ENCODE measurements at regions of chr14 and their contacts with region 1.

Region 1: DNA sequence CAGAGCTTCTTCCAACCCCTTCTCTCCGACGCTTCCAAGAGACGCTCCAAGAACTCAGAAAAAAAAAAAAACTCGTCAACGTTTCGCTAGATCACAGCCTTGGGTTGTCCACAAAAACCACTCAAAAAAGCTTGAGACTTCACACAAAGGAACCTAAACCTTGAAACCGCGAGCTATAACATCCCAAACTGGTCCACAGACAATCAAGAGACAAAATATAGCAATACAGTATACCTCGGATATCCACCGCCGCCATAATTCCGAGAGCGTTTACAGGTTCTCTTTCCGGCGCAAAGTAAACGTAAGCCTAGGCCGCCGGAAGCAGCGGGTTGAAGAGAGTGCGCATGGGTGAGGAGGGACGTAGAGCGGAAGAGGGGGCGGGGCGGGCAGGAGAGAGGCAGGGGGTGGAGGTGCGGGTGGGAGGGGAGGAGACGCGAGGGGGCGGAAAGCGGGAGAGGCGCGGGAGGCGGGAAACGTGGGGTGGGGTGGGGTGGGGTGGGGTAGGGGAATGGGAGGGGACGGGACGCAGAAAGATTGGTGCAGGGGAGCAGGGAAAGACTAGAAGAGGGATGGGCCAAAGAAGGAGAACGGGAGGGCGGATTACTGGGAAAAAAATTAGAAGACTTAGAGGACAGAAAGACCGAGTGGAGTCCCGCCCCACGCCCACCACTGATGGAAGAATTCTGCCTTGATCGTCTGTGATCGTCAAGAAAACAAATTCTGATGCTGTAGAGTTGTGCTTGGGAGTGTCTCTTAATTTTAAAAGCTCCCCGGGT is at the start of gene MED6:
- DNase-seq: peak; percentile 94
- ATAC-seq: peak; percentile 95
- H3K4me3 ChIP-seq: peak within 1 kb of the TSS; percentile 87
- H3K27ac ChIP-seq: peak within 1 kb of the TSS; percentile 31
- H3K4me1 ChIP-seq: peaks cover 24% of the 10 kb centered on the region
- H3K27me3 ChIP-seq: no peaks in the 10 kb centered on the region
- CTCF ChIP-seq: no peak
- total RNA-seq, gene MED6: 37.8 and 46.9 TPM in 2 replicates

Region 2: DNA sequence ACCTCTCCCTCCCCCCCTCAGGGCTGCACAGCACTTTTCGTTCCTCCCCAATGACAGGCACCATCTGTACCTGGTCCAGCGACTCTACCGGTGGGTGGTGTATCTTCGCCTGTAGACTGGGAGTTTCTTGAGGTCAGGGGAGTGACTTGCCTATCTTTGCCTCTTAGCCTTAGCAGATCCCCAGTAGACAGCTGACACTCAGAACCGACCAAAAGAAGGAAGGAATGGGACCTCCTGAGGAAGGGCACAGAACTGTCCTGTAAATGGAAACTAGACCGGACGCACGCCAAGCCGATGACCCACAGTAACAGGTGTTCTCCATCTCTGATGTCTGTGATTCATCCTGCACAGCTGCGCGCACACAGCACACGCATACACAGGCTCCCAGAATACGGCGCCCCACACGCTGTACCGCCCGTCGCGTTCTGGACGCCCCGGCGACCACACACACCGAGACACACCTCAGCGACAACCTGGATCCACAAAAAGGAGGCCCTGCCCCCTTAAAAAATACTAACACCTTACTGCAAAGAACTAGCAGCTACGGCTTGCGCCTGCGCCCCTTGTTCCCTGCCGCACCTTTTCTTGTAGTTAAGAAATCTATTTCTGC is 40.5 kb after region 1 on chr14:
- CTCF ChIA-PET with region 1: no interaction called
- POLR2A ChIA-PET with region 1: no interaction called
- intact Hi-C with region 1: loop called (anchors 2 kb)
- DNase-seq: peak; percentile 69
- ATAC-seq: peak; percentile 78
- H3K4me3 ChIP-seq: peak overlapping the region; percentile 85
- H3K27ac ChIP-seq: no peak overlapping the region
- H3K4me1 ChIP-seq: peaks cover 17% of the 10 kb centered on the region; the same call in 1 of the 2 replicates
- H3K27me3 ChIP-seq: peaks cover 30% of the 10 kb centered on the region
- CTCF ChIP-seq: no peak

Measured in PC-3 (cell line).